Ascending aorta (tissue), 2 donors: ENCODE measurements at regions of chr10 and their contacts with region 1.

Region 1: DNA sequence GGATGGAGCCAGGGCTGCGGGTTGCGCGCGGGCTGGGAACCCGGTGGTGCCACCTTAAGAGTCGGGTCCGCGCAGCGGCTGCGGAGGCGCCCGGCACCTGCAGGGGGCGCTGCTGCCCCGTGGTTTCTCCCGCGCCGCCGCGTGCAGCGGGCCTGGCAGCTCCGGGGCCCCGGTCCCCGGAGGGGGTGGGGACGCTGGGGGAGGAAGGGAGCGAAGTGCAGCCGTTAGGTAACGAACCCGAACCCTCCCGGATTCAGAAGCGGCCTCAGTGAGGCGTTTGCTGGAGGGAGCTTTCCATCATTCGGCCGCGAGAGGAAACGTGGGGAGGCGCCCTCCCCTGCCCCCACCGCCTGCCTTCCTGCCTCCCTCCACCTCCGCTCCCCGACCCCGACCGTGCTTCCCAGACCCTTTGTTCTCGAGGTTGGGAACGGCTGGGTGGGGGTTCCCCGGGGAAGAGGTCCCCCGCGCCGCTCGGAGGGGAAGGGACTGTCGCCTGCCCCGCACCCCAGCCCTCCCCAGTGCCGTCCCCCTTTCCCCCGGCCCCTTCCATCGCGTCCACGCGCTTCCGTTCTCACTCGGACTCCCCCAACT is 29.6 kb downstream of the SKIDA1 start:
- DNase-seq: peak in 1 of 2 donors; percentile 91
- H3K4me3 ChIP-seq: peak overlapping the region; percentile 68 to 95
- H3K27ac ChIP-seq: peak overlapping the region; percentile 35 to 51
- H3K4me1 ChIP-seq: peaks cover 6% of the 10 kb centered on the region in 2 donors
- H3K27me3 ChIP-seq: no peaks in the 10 kb centered on the region
- CTCF ChIP-seq: peak; percentile 84 to 98 (median 92)

Region 2: DNA sequence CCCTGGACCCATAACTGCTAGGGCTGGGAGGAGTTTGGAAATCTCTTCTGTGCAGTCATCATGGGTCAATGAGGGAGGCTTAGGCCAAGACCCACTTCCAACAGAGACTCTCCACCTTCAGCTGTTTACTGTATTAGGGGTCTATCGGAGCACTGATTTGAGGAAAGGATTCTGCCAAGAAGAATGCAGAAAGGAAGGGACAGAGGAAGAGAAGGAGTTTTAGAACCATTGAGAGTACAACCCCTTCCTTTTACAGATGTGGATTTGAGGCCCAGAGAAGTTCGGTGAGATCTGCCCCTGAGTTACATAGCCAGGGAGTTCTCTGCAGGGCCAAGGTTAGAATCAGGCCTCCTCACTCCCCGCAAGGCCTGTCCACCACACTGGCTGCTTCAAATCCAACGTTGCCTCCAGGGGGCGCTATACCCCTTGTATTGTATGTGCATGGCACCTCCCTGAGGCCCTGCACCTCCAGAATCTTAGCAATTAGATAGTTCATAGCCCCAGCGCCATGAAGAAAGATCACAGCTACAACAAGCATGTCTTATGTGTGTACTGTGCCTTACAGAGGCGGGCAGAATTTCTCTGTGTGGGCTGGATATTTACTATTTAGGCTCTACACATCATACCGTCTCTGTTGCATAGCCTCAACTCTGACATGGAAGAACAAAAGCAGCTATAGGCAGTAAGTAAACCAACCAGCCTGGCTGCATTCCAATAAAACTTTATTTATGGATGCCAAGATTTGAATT is 217.2 kb before region 1 on chr10:
- intact Hi-C with region 1: loop called (anchors 2 kb)
- DNase-seq: peak; percentile 56 to 93
- H3K4me3 ChIP-seq: no peak overlapping the region
- H3K27ac ChIP-seq: no peak overlapping the region
- H3K4me1 ChIP-seq: peaks cover 0 to 2% of the 10 kb centered on the region in 2 donors
- H3K27me3 ChIP-seq: no peaks in the 10 kb centered on the region
- CTCF ChIP-seq: peak; percentile 48 to 66 (median 61)

Region 3: GRCh38 chr10:21336476-21337170 is 159.2 kb before region 1 on chr10:
- intact Hi-C with region 1: loop called (anchors 2 kb)
- DNase-seq: peak in 1 of 2 donors; percentile 75
- H3K4me3 ChIP-seq: no peak overlapping the region
- H3K27ac ChIP-seq: no peak overlapping the region
- H3K4me1 ChIP-seq: peaks cover 2 to 18% of the 10 kb centered on the region in 2 donors
- H3K27me3 ChIP-seq: no peaks in the 10 kb centered on the region
- CTCF ChIP-seq: no peak

Region 4: GRCh38 chr10:21533467-21534279 is 37.8 kb after region 1 on chr10 and contains the start of gene MLLT10:
- intact Hi-C with region 1: loop called (anchors 1 kb)
- DNase-seq: peak; percentile 82 to 96
- H3K4me3 ChIP-seq: peak within 1 kb of the TSS; percentile 81 to 93
- H3K27ac ChIP-seq: peak within 1 kb of the TSS; percentile 89 to 94
- H3K4me1 ChIP-seq: peaks cover 0 to 10% of the 10 kb centered on the region in 2 donors
- H3K27me3 ChIP-seq: no peaks in the 10 kb centered on the region
- CTCF ChIP-seq: peak; percentile 37 to 48 (median 42)
- total RNA-seq, gene MLLT10: 16.3 TPM

Region 5: DNA sequence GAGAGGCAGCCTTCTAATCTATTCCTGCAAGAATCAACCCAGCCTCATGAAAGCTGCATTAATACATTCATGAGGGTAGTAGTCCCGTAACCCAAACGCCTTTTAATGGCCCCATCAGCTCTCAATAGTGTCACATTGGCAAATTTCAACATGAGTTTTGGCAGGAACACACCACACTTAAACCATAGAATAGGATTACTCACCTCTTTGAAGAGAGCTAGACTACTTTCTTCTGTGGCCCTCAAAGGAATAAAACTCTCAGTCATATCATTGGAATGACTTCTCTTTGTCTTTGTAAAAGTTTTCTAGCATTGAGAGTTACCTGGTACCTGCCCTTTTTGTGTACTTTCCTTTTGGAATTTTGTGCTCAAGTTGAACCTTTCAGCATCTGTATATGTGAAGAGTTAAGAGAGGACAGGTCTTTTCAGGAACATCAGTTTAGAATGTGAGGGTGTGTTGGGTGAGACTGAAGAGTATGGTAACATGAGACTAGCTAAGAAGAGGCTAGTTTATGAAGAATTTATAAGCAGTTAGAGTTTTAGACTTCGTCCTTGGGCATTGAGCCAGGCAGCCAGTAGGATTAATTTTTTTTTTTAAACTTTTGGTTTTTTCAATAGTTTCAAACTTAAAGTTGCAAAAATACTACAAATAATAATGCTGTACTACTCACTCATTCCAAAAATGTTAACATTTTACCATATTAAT is 130.8 kb after region 1 on chr10:
- intact Hi-C with region 1: no loop called
- DNase-seq: no peak
- H3K4me3 ChIP-seq: no peak overlapping the region
- H3K27ac ChIP-seq: no peak overlapping the region
- H3K4me1 ChIP-seq: no peaks in the 10 kb centered on the region
- H3K27me3 ChIP-seq: no peaks in the 10 kb centered on the region
- CTCF ChIP-seq: no peak

Region 6: GRCh38 chr10:21687266-21688008 is 191.6 kb after region 1 on chr10:
- intact Hi-C with region 1: no loop called
- DNase-seq: no peak
- H3K4me3 ChIP-seq: no peak overlapping the region
- H3K27ac ChIP-seq: no peak overlapping the region
- H3K4me1 ChIP-seq: no peaks in the 10 kb centered on the region
- H3K27me3 ChIP-seq: no peaks in the 10 kb centered on the region
- CTCF ChIP-seq: no peak

Region 7: GRCh38 chr10:22003079-22003913 is 507.4 kb after region 1 on chr10 and contains the start of gene DNAJC1:
- intact Hi-C with region 1: loop called (anchors 2 kb)
- DNase-seq: peak; percentile 93 to 99
- H3K4me3 ChIP-seq: peak within 1 kb of the TSS; percentile 74 to 81
- H3K27ac ChIP-seq: peak within 1 kb of the TSS; percentile 96
- H3K4me1 ChIP-seq: peaks cover 0 to 6% of the 10 kb centered on the region in 2 donors
- H3K27me3 ChIP-seq: no peaks in the 10 kb centered on the region
- CTCF ChIP-seq: peak in 2 of 3 experiments; percentile 13 to 15
- total RNA-seq, gene DNAJC1: 26.1 TPM

Region 8: GRCh38 chr10:22251751-22252223 is 755.9 kb after region 1 on chr10:
- intact Hi-C with region 1: loop called (anchors 10 kb)
- DNase-seq: peak in 1 of 2 donors; percentile 81
- H3K4me3 ChIP-seq: peak overlapping the region; percentile 81 to 93
- H3K27ac ChIP-seq: peak overlapping the region; percentile 98
- H3K4me1 ChIP-seq: no peaks in the 10 kb centered on the region
- H3K27me3 ChIP-seq: no peaks in the 10 kb centered on the region
- CTCF ChIP-seq: no peak

Region 9: GRCh38 chr10:22436884-22437619 is 941.2 kb after region 1 on chr10:
- intact Hi-C with region 1: loop called (anchors 5 kb)
- DNase-seq: peak; percentile 43 to 94
- H3K4me3 ChIP-seq: peak overlapping the region; percentile 72 to 78
- H3K27ac ChIP-seq: peak overlapping the region; percentile 92 to 97
- H3K4me1 ChIP-seq: peaks cover 0 to 15% of the 10 kb centered on the region in 2 donors
- H3K27me3 ChIP-seq: no peaks in the 10 kb centered on the region
- CTCF ChIP-seq: peak in 1 of 3 experiments; percentile 19